ENCODE measurements at regions of chr17 and their contacts with region 1.

Region 1: GRCh38 chr17:12180644-12181261 is 160.1 kb downstream of the MAP2K4 start:
- DNase-seq: peak; percentile 38
- ATAC-seq: no peak
- H3K4me3 Mint-ChIP-seq: no peak overlapping the region
- H3K27ac Mint-ChIP-seq: no peak overlapping the region
- H3K4me1 Mint-ChIP-seq: no peaks in the 10 kb centered on the region
- H3K27me3 Mint-ChIP-seq: peaks cover 3% of the 10 kb centered on the region

Region 2: GRCh38 chr17:12127177-12127576 is 53.6 kb before region 1 on chr17:
- CTCF ChIA-PET with region 1: no interaction called
- POLR2A ChIA-PET with region 1: no interaction called
- intact Hi-C with region 1: no loop called
- DNase-seq: no peak
- ATAC-seq: no peak
- H3K4me3 Mint-ChIP-seq: no peak overlapping the region
- H3K27ac Mint-ChIP-seq: no peak overlapping the region
- H3K4me1 Mint-ChIP-seq: peaks cover 3% of the 10 kb centered on the region
- H3K27me3 Mint-ChIP-seq: no peaks in the 10 kb centered on the region

Region 3: GRCh38 chr17:12522743-12523183 is 342.0 kb after region 1 on chr17:
- CTCF ChIA-PET with region 1: no interaction called
- POLR2A ChIA-PET with region 1: no interaction called
- intact Hi-C with region 1: no loop called
- DNase-seq: no peak
- ATAC-seq: no peak
- H3K4me3 Mint-ChIP-seq: no peak overlapping the region
- H3K27ac Mint-ChIP-seq: no peak overlapping the region
- H3K4me1 Mint-ChIP-seq: no peaks in the 10 kb centered on the region
- H3K27me3 Mint-ChIP-seq: no peaks in the 10 kb centered on the region

Region 4: GRCh38 chr17:12744298-12744697 is 563.5 kb after region 1 on chr17:
- CTCF ChIA-PET with region 1: interaction called, 11 read pairs
- POLR2A ChIA-PET with region 1: no interaction called
- intact Hi-C with region 1: loop called in 1 of 2 experiments (anchors 5 kb)
- DNase-seq: no peak
- ATAC-seq: no peak
- H3K4me3 Mint-ChIP-seq: no peak overlapping the region
- H3K27ac Mint-ChIP-seq: no peak overlapping the region
- H3K4me1 Mint-ChIP-seq: no peaks in the 10 kb centered on the region
- H3K27me3 Mint-ChIP-seq: peaks cover 4% of the 10 kb centered on the region

Region 5: DNA sequence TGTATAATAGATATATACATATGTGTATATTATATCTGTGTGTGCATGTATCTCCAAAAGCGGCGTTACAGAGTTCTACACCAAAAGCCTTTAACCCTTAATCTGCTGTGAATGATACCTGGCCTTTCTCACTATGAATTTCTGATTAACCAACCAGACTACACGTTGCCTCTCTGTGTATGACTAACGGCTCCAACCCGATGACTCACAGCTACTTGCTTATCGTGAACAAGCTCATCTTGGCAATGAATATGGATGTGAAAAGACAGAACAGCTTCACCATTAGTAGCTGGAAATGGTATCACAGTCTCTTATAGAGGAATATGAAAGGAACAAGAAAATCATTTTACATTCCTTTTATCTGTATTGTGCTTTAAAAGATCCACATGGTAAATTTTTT is 584.8 kb after region 1 on chr17:
- CTCF ChIA-PET with region 1: no interaction called
- POLR2A ChIA-PET with region 1: no interaction called
- intact Hi-C with region 1: no loop called
- DNase-seq: no peak
- ATAC-seq: no peak
- H3K4me3 Mint-ChIP-seq: no peak overlapping the region
- H3K27ac Mint-ChIP-seq: no peak overlapping the region
- H3K4me1 Mint-ChIP-seq: no peaks in the 10 kb centered on the region
- H3K27me3 Mint-ChIP-seq: no peaks in the 10 kb centered on the region

Region 6: GRCh38 chr17:12911239-12911638 is 730.5 kb after region 1 on chr17:
- CTCF ChIA-PET with region 1: no interaction called
- POLR2A ChIA-PET with region 1: no interaction called
- intact Hi-C with region 1: no loop called
- DNase-seq: no peak
- ATAC-seq: no peak
- H3K4me3 Mint-ChIP-seq: no peak overlapping the region
- H3K27ac Mint-ChIP-seq: no peak overlapping the region
- H3K4me1 Mint-ChIP-seq: no peaks in the 10 kb centered on the region
- H3K27me3 Mint-ChIP-seq: peaks cover 6% of the 10 kb centered on the region

Measured in activated CD4-positive, alpha-beta T cell treated with anti-CD3 and anti-CD28 coated beads for 36 hours (primary cell).